Activated naive CD8-positive, alpha-beta T cell treated with anti-CD3 and anti-CD28 coated beads, Interleukin-2, amount 10 ng/mL, durations not matched to agents 7 days and 5 days (primary cell): ENCODE measurements at regions of chr7 and their contacts with region 1.

Region 1: GRCh38 chr7:100586266-100587025 is at the start of gene FBXO24:
- DNase-seq: peak; percentile 98
- ATAC-seq: peak; percentile 83
- H3K4me3 Mint-ChIP-seq: peak within 1 kb of the TSS; percentile 94
- H3K27ac Mint-ChIP-seq: peak within 1 kb of the TSS; percentile 96
- H3K4me1 Mint-ChIP-seq: peaks cover 27% of the 10 kb centered on the region
- H3K27me3 Mint-ChIP-seq: peaks cover 11% of the 10 kb centered on the region
- total RNA-seq, gene FBXO24: 1.1 to 1.2 TPM

Region 2: DNA sequence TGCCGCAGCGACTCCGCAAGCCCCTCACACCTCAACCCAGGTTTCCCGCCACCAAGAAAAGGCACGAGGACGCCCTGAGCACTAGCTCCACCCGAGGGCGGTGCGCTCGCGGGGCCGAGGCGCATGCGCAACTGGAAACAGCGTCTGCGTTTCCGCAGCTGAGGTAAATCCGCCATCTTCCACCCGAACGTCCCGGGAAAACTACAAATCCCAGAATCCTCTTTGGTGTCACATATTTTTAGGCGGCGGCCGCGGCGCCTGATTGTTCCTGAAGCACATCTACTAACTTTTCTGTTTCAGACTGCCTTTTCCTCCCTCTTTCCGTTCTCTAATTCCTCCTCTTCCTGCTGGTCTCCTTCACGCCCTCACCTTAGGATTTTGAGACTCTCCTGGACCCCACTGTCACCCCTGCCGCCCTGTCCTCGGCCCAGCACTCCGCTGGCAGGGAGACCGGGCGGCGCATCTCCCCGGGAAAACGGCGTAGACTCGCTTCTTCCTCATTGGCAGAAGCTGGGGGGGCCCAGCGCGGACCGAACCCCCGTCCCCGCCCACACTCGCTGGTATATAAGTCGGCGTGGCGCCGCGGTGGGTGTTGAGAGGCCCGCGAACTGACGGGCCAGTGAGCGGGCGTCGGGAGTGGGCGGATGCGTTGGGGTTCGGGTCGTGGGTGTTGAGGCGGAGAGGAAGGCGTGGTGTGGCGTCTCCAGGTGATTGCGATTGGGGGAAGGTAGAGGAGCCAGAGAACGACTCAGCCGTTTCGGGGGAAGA is 158.1 kb before region 1 on chr7 and contains the start of gene ZCWPW1:
- POLR2A ChIA-PET with region 1: interaction called, 11 read pairs
- DNase-seq: peak; percentile 98
- ATAC-seq: peak; percentile 57
- H3K4me3 Mint-ChIP-seq: peak within 1 kb of the TSS; percentile 97
- H3K27ac Mint-ChIP-seq: peak within 1 kb of the TSS; percentile 99
- H3K4me1 Mint-ChIP-seq: peaks cover 28% of the 10 kb centered on the region
- H3K27me3 Mint-ChIP-seq: peaks cover 7% of the 10 kb centered on the region
- total RNA-seq, gene ZCWPW1: 6.2 to 6.5 TPM

Region 3: GRCh38 chr7:100563809-100564400 is 22.5 kb before region 1 on chr7:
- POLR2A ChIA-PET with region 1: interaction called, 89 read pairs
- DNase-seq: peak; percentile 88
- ATAC-seq: peak; percentile 70
- H3K4me3 Mint-ChIP-seq: no peak overlapping the region
- H3K27ac Mint-ChIP-seq: peak overlapping the region; percentile 3
- H3K4me1 Mint-ChIP-seq: peaks cover 20% of the 10 kb centered on the region
- H3K27me3 Mint-ChIP-seq: no peaks in the 10 kb centered on the region

Region 4: GRCh38 chr7:100604028-100604975 is 17.9 kb after region 1 on chr7:
- POLR2A ChIA-PET with region 1: interaction called, 56 read pairs
- DNase-seq: peak; percentile 90
- ATAC-seq: peak; percentile 80
- H3K4me3 Mint-ChIP-seq: peak overlapping the region; percentile 89
- H3K27ac Mint-ChIP-seq: peak overlapping the region; percentile 93
- H3K4me1 Mint-ChIP-seq: peaks cover 26% of the 10 kb centered on the region
- H3K27me3 Mint-ChIP-seq: peaks cover 11% of the 10 kb centered on the region

Region 5: DNA sequence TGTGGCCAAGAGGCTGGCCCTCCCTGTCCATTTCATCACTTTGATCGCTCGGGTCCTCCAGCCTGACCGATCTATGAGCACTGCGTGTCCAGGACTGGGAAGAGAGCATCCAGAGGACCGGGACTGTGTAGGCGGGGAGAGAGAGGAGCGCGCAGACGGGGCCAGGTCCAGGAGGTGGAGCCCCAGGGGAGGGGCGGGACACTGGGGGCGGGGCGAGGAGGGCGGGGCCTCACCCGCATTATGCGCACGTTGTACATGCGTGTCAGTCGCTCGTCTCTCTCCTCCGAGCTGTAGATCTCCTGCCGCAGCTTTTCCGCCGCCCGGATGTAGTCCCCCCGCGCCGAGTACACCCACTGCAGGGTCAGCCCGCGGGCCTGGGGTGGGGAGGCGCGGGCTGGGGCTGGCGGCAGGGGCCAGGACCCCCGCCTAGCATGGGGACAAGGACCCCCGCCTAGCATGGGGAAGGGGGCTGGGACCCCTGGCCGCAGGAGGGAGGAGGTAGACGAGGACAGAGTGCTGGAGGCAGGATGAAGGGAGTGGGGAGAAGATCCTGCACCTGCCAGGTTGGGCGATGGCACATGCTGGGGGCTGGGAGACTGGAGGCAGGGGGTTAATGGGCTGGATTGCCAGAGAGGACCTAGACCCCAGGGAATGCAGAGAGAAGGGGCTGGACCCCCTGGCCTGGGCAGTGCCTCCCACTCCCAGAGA is 40.2 kb after region 1 on chr7:
- POLR2A ChIA-PET with region 1: interaction called, 22 read pairs
- DNase-seq: peak; percentile 84
- ATAC-seq: peak; percentile 98
- H3K4me3 Mint-ChIP-seq: peak overlapping the region; percentile 83
- H3K27ac Mint-ChIP-seq: peak overlapping the region; percentile 88
- H3K4me1 Mint-ChIP-seq: peaks cover 37% of the 10 kb centered on the region
- H3K27me3 Mint-ChIP-seq: no peaks in the 10 kb centered on the region

Region 6: DNA sequence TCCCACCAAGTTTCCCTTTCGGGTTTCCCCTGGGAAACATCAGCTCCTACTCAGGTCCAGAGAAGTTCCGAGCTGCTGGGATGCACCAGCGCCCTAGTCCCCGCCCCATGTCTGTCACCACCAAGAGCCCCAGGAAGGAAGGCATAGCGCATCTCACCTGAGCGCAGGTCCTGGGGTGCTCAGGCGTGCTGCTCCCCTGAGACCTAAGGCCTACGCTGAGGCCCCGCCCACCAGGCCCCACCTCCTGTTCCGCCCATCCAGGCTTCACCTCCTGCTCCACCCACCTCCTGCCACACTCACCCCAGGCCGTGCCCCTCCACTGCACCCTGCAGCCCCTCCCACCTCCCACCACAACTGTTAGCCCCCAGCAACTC is 56.1 kb after region 1 on chr7:
- POLR2A ChIA-PET with region 1: no interaction called
- DNase-seq: no peak
- ATAC-seq: peak; percentile 63
- H3K4me3 Mint-ChIP-seq: no peak overlapping the region
- H3K27ac Mint-ChIP-seq: no peak overlapping the region
- H3K4me1 Mint-ChIP-seq: no peaks in the 10 kb centered on the region
- H3K27me3 Mint-ChIP-seq: peaks cover under 1% of the 10 kb centered on the region

Region 7: DNA sequence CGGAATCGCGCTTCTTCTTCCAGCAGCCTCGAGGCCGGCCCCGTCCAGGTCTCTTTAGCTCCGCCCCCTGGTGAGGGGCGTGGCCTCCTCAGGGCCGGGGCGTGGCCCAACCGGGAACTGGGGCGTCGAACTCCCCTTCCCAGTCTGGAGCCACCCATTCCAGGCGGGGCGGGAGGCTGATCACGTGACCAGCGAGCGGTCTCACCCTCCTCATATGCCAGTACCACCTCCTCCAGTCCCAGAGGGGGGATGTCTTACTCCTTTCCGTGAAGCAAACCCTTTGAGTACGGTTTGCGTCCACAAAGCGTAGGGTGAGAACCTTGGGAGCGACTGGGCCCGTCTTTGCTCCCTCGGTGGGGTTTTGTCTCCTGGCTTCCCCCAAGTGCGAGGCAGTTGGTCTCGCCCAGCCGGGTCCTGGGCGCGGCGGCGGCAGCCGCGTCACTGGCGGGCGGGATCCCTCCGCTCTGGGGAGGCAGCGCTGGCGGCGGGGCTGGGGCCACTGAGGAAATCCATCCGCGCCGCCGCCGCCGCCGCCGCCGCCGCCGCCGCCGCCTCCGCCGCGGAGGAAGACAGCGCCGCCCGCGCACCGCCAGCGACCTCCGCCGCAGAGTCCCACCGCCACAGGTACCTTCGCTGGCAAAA is 87.0 kb after region 1 on chr7 and contains the start of gene GNB2:
- POLR2A ChIA-PET with region 1: interaction called, 41 read pairs
- DNase-seq: peak; percentile 100
- ATAC-seq: peak; percentile 64
- H3K4me3 Mint-ChIP-seq: peak within 1 kb of the TSS; percentile 98
- H3K27ac Mint-ChIP-seq: peak within 1 kb of the TSS; percentile 95
- H3K4me1 Mint-ChIP-seq: peaks cover 16% of the 10 kb centered on the region
- H3K27me3 Mint-ChIP-seq: peaks cover 7% of the 10 kb centered on the region
- total RNA-seq, gene GNB2: 203 to 216 TPM